Activated B cell treated with CpG ODN at 0.5 μM for 24 hours (primary cell): ENCODE measurements at regions of chr9 and their contacts with region 1.

Region 1: GRCh38 chr9:99513441-99514112 is 291.5 kb downstream of the SEC61B start:
- DNase-seq: peak; percentile 22
- ATAC-seq: peak; percentile 49
- H3K4me3 Mint-ChIP-seq: peak overlapping the region; percentile 61
- H3K27ac Mint-ChIP-seq: peak overlapping the region; percentile 84
- H3K4me1 Mint-ChIP-seq: peaks cover 88% of the 10 kb centered on the region
- H3K27me3 Mint-ChIP-seq: no peaks in the 10 kb centered on the region
- CTCF ChIP-seq: no peak

Region 2: DNA sequence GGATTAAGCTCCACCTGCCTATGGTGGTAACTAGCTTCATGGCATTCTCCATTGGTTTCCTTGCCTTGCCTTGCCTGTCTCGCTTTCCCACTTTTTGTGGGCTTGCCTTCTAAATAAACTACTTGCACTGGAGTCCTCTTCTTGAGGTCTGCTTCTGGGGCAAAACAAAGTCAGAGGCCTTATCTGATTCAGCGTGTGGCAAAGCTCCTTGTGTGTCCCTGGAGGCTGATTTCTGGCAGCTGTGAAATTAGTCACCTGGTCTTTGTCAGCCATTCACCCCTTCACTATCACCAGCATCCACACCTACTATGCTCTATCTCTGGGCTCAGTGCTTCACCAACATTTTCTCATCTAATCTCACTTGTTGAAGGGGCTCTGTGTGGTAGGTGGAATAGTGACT is 115.3 kb before region 1 on chr9:
- CTCF ChIA-PET with region 1: no interaction called
- POLR2A ChIA-PET with region 1: no interaction called
- intact Hi-C with region 1: no loop called
- DNase-seq: no peak
- ATAC-seq: no peak
- H3K4me3 Mint-ChIP-seq: no peak overlapping the region
- H3K27ac Mint-ChIP-seq: no peak overlapping the region
- H3K4me1 Mint-ChIP-seq: no peaks in the 10 kb centered on the region
- H3K27me3 Mint-ChIP-seq: no peaks in the 10 kb centered on the region
- CTCF ChIP-seq: no peak

Region 3: GRCh38 chr9:99488734-99489413 is 24.7 kb before region 1 on chr9:
- CTCF ChIA-PET with region 1: interaction called, 4 read pairs
- POLR2A ChIA-PET with region 1: no interaction called
- intact Hi-C with region 1: loop called (anchors 1 kb)
- DNase-seq: no peak
- ATAC-seq: no peak
- H3K4me3 Mint-ChIP-seq: no peak overlapping the region
- H3K27ac Mint-ChIP-seq: no peak overlapping the region
- H3K4me1 Mint-ChIP-seq: peaks cover 30% of the 10 kb centered on the region
- H3K27me3 Mint-ChIP-seq: no peaks in the 10 kb centered on the region
- CTCF ChIP-seq: no peak

Region 4: GRCh38 chr9:99595796-99596195 is 82.2 kb after region 1 on chr9:
- CTCF ChIA-PET with region 1: interaction called, 3 read pairs
- POLR2A ChIA-PET with region 1: interaction called, 7 read pairs
- intact Hi-C with region 1: loop called (anchors 5 kb)
- DNase-seq: no peak
- ATAC-seq: peak; percentile 78
- H3K4me3 Mint-ChIP-seq: peak overlapping the region; percentile 21
- H3K27ac Mint-ChIP-seq: peak overlapping the region; percentile 85
- H3K4me1 Mint-ChIP-seq: peaks cover 54% of the 10 kb centered on the region
- H3K27me3 Mint-ChIP-seq: no peaks in the 10 kb centered on the region
- CTCF ChIP-seq: no peak